Naive thymus-derived CD4-positive, alpha-beta T cell (primary cell): ENCODE measurements at regions of chr12 and their contacts with region 1.

Region 1: GRCh38 chr12:117874842-117875434 is 93.9 kb downstream of the KSR2 start:
- DNase-seq: peak; percentile 10 to 70 (median 39)
- ATAC-seq: peak; percentile 69
- H3K4me3 ChIP-seq: no peak overlapping the region
- H3K4me3 Mint-ChIP-seq: peak overlapping the region in 1 of 10 donors; percentile 30
- H3K27ac ChIP-seq: no peak overlapping the region
- H3K27ac Mint-ChIP-seq: peak overlapping the region in 1 of 9 donors; percentile 34
- H3K4me1 ChIP-seq: peaks cover 0 to 4% of the 10 kb centered on the region in 2 donors
- H3K4me1 Mint-ChIP-seq: peaks cover 0 to 6% (median 4%) of the 10 kb centered on the region in 7 donors
- H3K27me3 ChIP-seq: peaks cover 0 to 3% of the 10 kb centered on the region in 2 donors
- H3K27me3 Mint-ChIP-seq: peaks cover 20 to 34% (median 26%) of the 10 kb centered on the region in 5 donors

Region 2: GRCh38 chr12:117470804-117471203 is 404.1 kb before region 1 on chr12:
- CTCF ChIA-PET with region 1: no interaction called
- POLR2A ChIA-PET with region 1: no interaction called
- intact Hi-C with region 1: no loop called
- DNase-seq: no peak
- ATAC-seq: no peak
- H3K4me3 ChIP-seq: no peak overlapping the region
- H3K4me3 Mint-ChIP-seq: no peak overlapping the region
- H3K27ac ChIP-seq: no peak overlapping the region
- H3K27ac Mint-ChIP-seq: no peak overlapping the region
- H3K4me1 ChIP-seq: no peaks in the 10 kb centered on the region
- H3K4me1 Mint-ChIP-seq: no peaks in the 10 kb centered on the region
- H3K27me3 ChIP-seq: peaks cover 0 to 4% of the 10 kb centered on the region in 2 donors
- H3K27me3 Mint-ChIP-seq: peaks cover 0 to 13% (median 0%) of the 10 kb centered on the region in 5 donors

Region 3: GRCh38 chr12:117662620-117663395 is 212.1 kb before region 1 on chr12:
- CTCF ChIA-PET with region 1: no interaction called
- POLR2A ChIA-PET with region 1: no interaction called
- intact Hi-C with region 1: no loop called
- DNase-seq: no peak
- ATAC-seq: no peak
- H3K4me3 ChIP-seq: no peak overlapping the region
- H3K4me3 Mint-ChIP-seq: no peak overlapping the region
- H3K27ac ChIP-seq: no peak overlapping the region
- H3K27ac Mint-ChIP-seq: no peak overlapping the region
- H3K4me1 ChIP-seq: no peaks in the 10 kb centered on the region
- H3K4me1 Mint-ChIP-seq: no peaks in the 10 kb centered on the region
- H3K27me3 ChIP-seq: no peaks in the 10 kb centered on the region
- H3K27me3 Mint-ChIP-seq: peaks cover 0 to 10% (median under 1%) of the 10 kb centered on the region in 5 donors

Region 4: GRCh38 chr12:118034429-118035215 is 159.7 kb after region 1 on chr12:
- CTCF ChIA-PET with region 1: no interaction called
- POLR2A ChIA-PET with region 1: no interaction called
- intact Hi-C with region 1: loop called in 1 of 2 experiments (anchors 1 kb)
- DNase-seq: no peak
- ATAC-seq: no peak
- H3K4me3 ChIP-seq: no peak overlapping the region
- H3K4me3 Mint-ChIP-seq: no peak overlapping the region
- H3K27ac ChIP-seq: no peak overlapping the region
- H3K27ac Mint-ChIP-seq: peak overlapping the region in 6 of 9 donors; percentile 3 to 65 (median 60)
- H3K4me1 ChIP-seq: no peaks in the 10 kb centered on the region
- H3K4me1 Mint-ChIP-seq: peaks cover 0 to 28% (median 0%) of the 10 kb centered on the region in 7 donors
- H3K27me3 ChIP-seq: no peaks in the 10 kb centered on the region
- H3K27me3 Mint-ChIP-seq: no peaks in the 10 kb centered on the region

Region 5: DNA sequence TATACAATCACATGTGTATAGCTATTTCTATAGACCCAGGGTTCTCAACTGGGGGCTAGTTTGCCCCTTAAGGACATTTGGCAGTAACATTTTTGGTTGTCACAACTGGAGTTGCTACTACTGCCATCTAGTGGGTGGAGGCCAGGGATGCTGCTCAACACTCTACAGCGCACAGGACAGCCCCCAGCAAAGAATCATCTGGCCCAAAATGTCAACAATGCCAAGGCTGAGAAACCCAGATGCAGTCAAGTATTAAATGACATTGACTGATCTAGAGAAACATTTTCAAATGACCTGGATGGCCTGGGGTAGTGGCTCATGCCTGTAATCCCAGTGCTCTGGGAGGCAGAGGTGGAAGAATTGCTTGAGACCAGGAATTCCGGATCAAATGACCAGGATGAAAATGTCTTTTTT is 180.2 kb after region 1 on chr12:
- CTCF ChIA-PET with region 1: interaction called, 5 read pairs
- POLR2A ChIA-PET with region 1: no interaction called
- intact Hi-C with region 1: loop called in 1 of 2 experiments (anchors 1 kb)
- DNase-seq: peak; percentile 22 to 64 (median 56)
- ATAC-seq: peak; percentile 89
- H3K4me3 ChIP-seq: no peak overlapping the region
- H3K4me3 Mint-ChIP-seq: no peak overlapping the region
- H3K27ac ChIP-seq: no peak overlapping the region
- H3K27ac Mint-ChIP-seq: peak overlapping the region in 6 of 9 donors; percentile 41 to 84 (median 76)
- H3K4me1 ChIP-seq: peaks cover 10 to 25% of the 10 kb centered on the region in 2 donors
- H3K4me1 Mint-ChIP-seq: peaks cover 20 to 41% (median 35%) of the 10 kb centered on the region in 7 donors
- H3K27me3 ChIP-seq: no peaks in the 10 kb centered on the region
- H3K27me3 Mint-ChIP-seq: no peaks in the 10 kb centered on the region

Region 6: DNA sequence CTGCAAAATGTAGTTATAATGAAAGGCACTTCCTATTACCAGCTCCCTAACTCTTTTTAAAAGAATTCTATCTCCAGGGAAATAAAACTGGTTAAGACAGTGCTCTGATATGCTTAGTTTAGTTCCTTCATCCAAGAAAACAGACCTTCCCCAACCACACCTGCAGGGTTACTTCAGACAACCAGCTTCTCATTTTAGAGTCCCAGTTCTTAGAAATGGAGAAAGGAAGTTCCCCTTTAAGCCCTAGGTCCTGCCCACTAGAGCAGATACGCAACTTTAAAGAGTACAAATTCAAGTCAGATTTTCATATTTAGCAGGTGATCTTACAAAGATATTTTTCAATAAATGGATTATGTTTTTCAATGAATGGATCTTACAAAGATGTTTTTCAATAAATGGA is 190.4 kb after region 1 on chr12:
- CTCF ChIA-PET with region 1: no interaction called
- POLR2A ChIA-PET with region 1: no interaction called
- intact Hi-C with region 1: no loop called
- DNase-seq: no peak
- ATAC-seq: no peak
- H3K4me3 ChIP-seq: no peak overlapping the region
- H3K4me3 Mint-ChIP-seq: peak overlapping the region in 9 of 10 donors; percentile 44 to 78 (median 57)
- H3K27ac ChIP-seq: no peak overlapping the region
- H3K27ac Mint-ChIP-seq: peak overlapping the region in 3 of 9 donors; percentile 3 to 50 (median 10)
- H3K4me1 ChIP-seq: peaks cover 0 to 20% of the 10 kb centered on the region in 2 donors
- H3K4me1 Mint-ChIP-seq: peaks cover 32 to 61% (median 46%) of the 10 kb centered on the region in 7 donors
- H3K27me3 ChIP-seq: no peaks in the 10 kb centered on the region
- H3K27me3 Mint-ChIP-seq: peaks cover 0 to 9% (median 0%) of the 10 kb centered on the region in 5 donors